Activated B cell treated with CpG ODN at 0.5 μM for 24 hours (primary cell): ENCODE measurements at regions of chr2 and their contacts with region 1.

Region 1: GRCh38 chr2:155961641-155962040 is 370.9 kb downstream of the NR4A2 start:
- DNase-seq: no peak
- ATAC-seq: no peak
- H3K4me3 Mint-ChIP-seq: no peak overlapping the region
- H3K27ac Mint-ChIP-seq: no peak overlapping the region
- H3K4me1 Mint-ChIP-seq: no peaks in the 10 kb centered on the region
- H3K27me3 Mint-ChIP-seq: no peaks in the 10 kb centered on the region
- CTCF ChIP-seq: no peak

Region 2: GRCh38 chr2:155944218-155944617 is 17.4 kb before region 1 on chr2:
- CTCF ChIA-PET with region 1: no interaction called
- POLR2A ChIA-PET with region 1: no interaction called
- intact Hi-C with region 1: loop called (anchors 1 kb)
- DNase-seq: no peak
- ATAC-seq: no peak
- H3K4me3 Mint-ChIP-seq: no peak overlapping the region
- H3K27ac Mint-ChIP-seq: no peak overlapping the region
- H3K4me1 Mint-ChIP-seq: no peaks in the 10 kb centered on the region
- H3K27me3 Mint-ChIP-seq: no peaks in the 10 kb centered on the region
- CTCF ChIP-seq: no peak